CD4-positive, alpha-beta memory T cell (primary cell): ENCODE measurements at regions of chr20 and their contacts with region 1.

Region 1: GRCh38 chr20:36754656-36755222 is 8.8 kb upstream of the NDRG3 start:
- DNase-seq: peak; percentile 46 to 50 (median 48)
- H3K4me3 ChIP-seq: no peak overlapping the region
- H3K4me3 Mint-ChIP-seq: no peak overlapping the region
- H3K27ac ChIP-seq: no peak overlapping the region
- H3K27ac Mint-ChIP-seq: peak overlapping the region in 3 of 7 donors; percentile 13 to 55 (median 47)
- H3K4me1 ChIP-seq: no peaks in the 10 kb centered on the region
- H3K4me1 Mint-ChIP-seq: peaks cover 0 to 5% (median 3%) of the 10 kb centered on the region in 4 donors
- H3K27me3 ChIP-seq: no peaks in the 10 kb centered on the region
- H3K27me3 Mint-ChIP-seq: no peaks in the 10 kb centered on the region

Region 2: DNA sequence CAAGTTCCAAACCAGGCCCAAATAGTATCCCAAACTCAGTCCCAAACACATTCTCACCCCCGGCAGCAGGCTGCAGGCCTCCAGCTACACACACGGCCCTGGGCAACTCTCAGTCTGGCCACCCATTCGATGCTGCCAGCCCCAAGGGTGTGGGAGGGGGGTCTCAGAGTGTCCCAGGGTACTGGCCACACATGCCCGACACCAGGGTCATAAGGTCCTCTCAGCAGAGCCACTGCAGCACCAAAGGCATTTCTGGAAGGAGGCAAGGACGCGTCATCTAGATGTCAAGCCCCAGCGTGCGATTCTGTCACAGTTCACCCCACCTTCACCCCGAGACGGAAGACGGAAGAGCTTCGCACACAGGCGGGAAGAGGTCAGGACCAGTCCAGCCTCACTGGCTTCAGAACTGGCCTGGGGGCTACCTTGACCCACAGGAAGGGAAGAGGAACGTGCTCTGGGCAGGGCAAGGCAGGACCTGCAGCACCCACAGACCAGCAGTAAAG is 203.9 kb before region 1 on chr20:
- CTCF ChIA-PET with region 1: no interaction called
- POLR2A ChIA-PET with region 1: no interaction called
- intact Hi-C with region 1: loop called (anchors 1 kb)
- DNase-seq: no peak
- H3K4me3 ChIP-seq: no peak overlapping the region
- H3K4me3 Mint-ChIP-seq: no peak overlapping the region
- H3K27ac ChIP-seq: no peak overlapping the region
- H3K27ac Mint-ChIP-seq: no peak overlapping the region
- H3K4me1 ChIP-seq: no peaks in the 10 kb centered on the region
- H3K4me1 Mint-ChIP-seq: peaks cover 0 to 7% (median under 1%) of the 10 kb centered on the region in 4 donors
- H3K27me3 ChIP-seq: no peaks in the 10 kb centered on the region
- H3K27me3 Mint-ChIP-seq: no peaks in the 10 kb centered on the region

Region 3: GRCh38 chr20:36591854-36592641 is 162.7 kb before region 1 on chr20:
- CTCF ChIA-PET with region 1: interaction called, 10 read pairs
- POLR2A ChIA-PET with region 1: no interaction called
- intact Hi-C with region 1: no loop called
- DNase-seq: peak; percentile 51 to 87 (median 63)
- H3K4me3 ChIP-seq: no peak overlapping the region
- H3K4me3 Mint-ChIP-seq: peak overlapping the region in 7 of 8 donors; percentile 26 to 77 (median 57)
- H3K27ac ChIP-seq: peak overlapping the region; percentile 38
- H3K27ac Mint-ChIP-seq: peak overlapping the region; percentile 77 to 93 (median 86)
- H3K4me1 ChIP-seq: peaks cover 51% of the 10 kb centered on the region
- H3K4me1 Mint-ChIP-seq: peaks cover 29 to 64% (median 44%) of the 10 kb centered on the region in 4 donors
- H3K27me3 ChIP-seq: no peaks in the 10 kb centered on the region
- H3K27me3 Mint-ChIP-seq: no peaks in the 10 kb centered on the region

Region 4: GRCh38 chr20:36717657-36718056 is 37.1 kb before region 1 on chr20:
- CTCF ChIA-PET with region 1: interaction called, 55 read pairs
- POLR2A ChIA-PET with region 1: no interaction called
- intact Hi-C with region 1: loop called (anchors 1 kb)
- DNase-seq: peak in 4 of 5 donors; percentile 17 to 30 (median 22)
- H3K4me3 ChIP-seq: no peak overlapping the region
- H3K4me3 Mint-ChIP-seq: no peak overlapping the region
- H3K27ac ChIP-seq: no peak overlapping the region
- H3K27ac Mint-ChIP-seq: peak overlapping the region in 1 of 7 donors; percentile 8
- H3K4me1 ChIP-seq: no peaks in the 10 kb centered on the region
- H3K4me1 Mint-ChIP-seq: peaks cover 0 to 5% (median 4%) of the 10 kb centered on the region in 4 donors
- H3K27me3 ChIP-seq: no peaks in the 10 kb centered on the region
- H3K27me3 Mint-ChIP-seq: no peaks in the 10 kb centered on the region

Region 5: GRCh38 chr20:36794116-36794474 is 39.4 kb after region 1 on chr20:
- CTCF ChIA-PET with region 1: no interaction called
- POLR2A ChIA-PET with region 1: no interaction called
- intact Hi-C with region 1: no loop called
- DNase-seq: no peak
- H3K4me3 ChIP-seq: no peak overlapping the region
- H3K4me3 Mint-ChIP-seq: no peak overlapping the region
- H3K27ac ChIP-seq: no peak overlapping the region
- H3K27ac Mint-ChIP-seq: peak overlapping the region in 1 of 7 donors; percentile 64
- H3K4me1 ChIP-seq: no peaks in the 10 kb centered on the region
- H3K4me1 Mint-ChIP-seq: no peaks in the 10 kb centered on the region
- H3K27me3 ChIP-seq: no peaks in the 10 kb centered on the region
- H3K27me3 Mint-ChIP-seq: peaks cover 0 to 1% of the 10 kb centered on the region in 2 donors

Region 6: DNA sequence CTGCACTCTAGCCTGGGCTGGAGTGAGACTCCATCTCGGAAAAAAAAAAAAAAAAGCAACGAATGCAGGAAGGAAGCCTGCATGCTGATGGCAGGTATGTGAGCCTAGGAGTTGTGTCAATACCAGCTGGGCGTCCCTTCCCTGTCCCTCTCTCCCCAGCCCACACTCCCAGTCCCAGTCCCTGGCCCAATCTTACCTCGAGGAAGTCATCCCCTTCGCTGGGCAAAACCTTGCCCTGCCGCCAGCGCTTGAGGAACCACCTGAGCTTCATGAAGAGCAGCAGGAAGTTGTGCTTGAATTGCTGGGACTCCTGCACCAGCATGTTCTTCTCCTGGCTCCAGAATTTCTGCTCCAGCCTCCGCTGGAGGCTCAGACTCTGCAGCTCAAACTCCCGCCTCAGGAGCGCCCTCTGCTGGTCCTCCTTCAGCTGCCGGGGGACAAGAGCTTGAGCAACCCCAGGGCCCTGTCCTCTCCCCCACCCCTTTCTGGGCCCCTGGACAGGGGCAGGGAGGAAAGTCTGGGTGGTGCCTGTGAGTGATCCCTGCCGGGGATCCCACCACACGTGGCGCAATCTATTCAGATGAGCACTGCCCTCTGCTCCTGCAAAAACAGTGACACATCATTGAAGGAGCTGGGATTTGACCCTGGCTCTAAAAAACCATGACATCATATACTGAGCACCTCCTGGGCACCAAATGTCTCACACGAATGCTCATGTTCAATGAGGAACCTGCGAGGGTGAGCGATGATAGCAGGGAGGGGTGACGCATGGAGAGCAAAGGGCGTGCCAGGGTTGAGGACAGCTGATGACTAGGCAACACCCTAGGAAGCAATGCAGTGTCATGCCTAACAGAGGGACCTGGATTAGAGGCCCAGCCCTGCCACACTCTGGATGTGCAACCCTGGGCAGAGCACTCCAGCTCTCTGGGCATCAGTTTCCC is 53.8 kb after region 1 on chr20:
- CTCF ChIA-PET with region 1: interaction called, 12 read pairs
- POLR2A ChIA-PET with region 1: no interaction called
- intact Hi-C with region 1: no loop called
- DNase-seq: peak; percentile 49 to 65 (median 59)
- H3K4me3 ChIP-seq: no peak overlapping the region
- H3K4me3 Mint-ChIP-seq: no peak overlapping the region
- H3K27ac ChIP-seq: no peak overlapping the region
- H3K27ac Mint-ChIP-seq: peak overlapping the region in 1 of 7 donors; percentile 56
- H3K4me1 ChIP-seq: no peaks in the 10 kb centered on the region
- H3K4me1 Mint-ChIP-seq: peaks cover 0 to 3% (median 0%) of the 10 kb centered on the region in 4 donors
- H3K27me3 ChIP-seq: no peaks in the 10 kb centered on the region
- H3K27me3 Mint-ChIP-seq: no peaks in the 10 kb centered on the region